ENCODE measurements at regions of chr15 and their contacts with region 1.

Region 1: DNA sequence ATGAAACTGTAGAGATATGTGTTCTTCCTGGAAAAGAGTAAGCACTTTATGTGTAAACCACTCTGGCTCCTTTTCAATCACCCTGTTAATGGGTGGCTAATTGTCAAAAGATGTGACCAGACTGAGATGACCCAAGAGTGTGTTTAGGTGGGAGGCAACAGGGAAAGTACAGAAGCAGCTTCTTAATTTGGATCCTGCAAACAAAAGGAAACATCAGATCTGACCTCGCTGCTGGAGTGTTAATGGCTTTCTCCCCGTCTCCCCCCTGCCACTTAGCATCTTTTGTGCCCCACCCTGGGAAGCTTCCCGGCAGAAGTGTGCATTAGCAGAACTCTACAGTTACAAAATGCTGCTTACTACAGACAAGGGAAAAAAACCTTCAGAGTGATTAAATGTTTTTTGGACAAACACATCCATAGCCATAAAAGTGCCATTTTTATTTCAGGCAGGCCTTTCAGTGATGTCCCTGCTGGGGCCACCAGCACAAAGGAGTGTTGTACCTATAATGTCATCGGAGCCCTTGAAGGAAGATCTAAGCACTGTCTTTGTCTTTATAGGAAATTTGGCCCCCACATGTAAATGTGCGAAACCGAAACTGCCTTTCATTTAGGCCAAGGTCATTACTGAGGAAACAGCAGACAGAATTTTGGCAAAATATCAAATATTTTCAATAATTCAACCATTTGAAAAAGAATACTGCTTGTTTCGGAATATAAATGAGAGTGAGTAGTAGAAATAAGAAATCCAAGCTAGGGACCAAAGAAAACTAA is 311.0 kb downstream of the WDR72 start:
- DNase-seq: no peak
- ATAC-seq: no peak
- H3K4me3 ChIP-seq: no peak overlapping the region
- H3K27ac ChIP-seq: no peak overlapping the region
- H3K4me1 ChIP-seq: no peaks in the 10 kb centered on the region
- H3K27me3 ChIP-seq: no peaks in the 10 kb centered on the region

Region 2: DNA sequence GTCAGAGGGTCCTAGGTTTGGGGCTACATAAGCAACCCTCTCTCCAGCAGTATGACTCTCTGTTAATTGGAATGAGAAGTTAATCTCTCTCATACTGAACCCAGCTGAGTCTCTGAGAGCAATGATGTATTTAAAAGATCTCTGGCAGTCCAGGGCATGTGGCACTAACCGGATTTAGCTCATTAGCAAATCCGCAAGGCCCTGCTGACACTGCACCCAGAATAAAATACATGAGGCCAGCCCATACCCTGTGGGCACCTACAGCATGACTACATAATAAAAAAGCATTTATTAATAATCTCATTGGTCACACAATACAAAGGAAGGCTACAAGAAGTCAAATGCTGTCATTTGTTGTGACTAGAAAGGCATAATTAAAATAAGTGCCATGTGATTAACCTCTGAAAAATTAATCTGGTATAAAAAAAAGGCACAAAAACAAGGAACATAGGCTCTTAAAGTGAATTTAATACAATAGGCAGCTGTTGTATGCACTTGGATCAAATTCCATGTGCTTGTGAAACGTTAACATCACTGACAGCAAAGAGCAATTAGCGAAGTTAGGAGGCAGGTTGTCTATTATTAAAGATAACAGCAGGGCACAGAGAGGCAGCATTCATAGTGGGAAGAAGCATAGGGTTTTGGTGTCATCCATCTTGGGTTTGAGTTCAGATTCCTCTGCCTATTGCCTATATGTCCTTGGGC is 70.2 kb before region 1 on chr15:
- intact Hi-C with region 1: loop called in 1 of 2 experiments (anchors 10 kb)
- DNase-seq: no peak
- ATAC-seq: no peak
- H3K4me3 ChIP-seq: no peak overlapping the region
- H3K27ac ChIP-seq: no peak overlapping the region
- H3K4me1 ChIP-seq: no peaks in the 10 kb centered on the region
- H3K27me3 ChIP-seq: no peaks in the 10 kb centered on the region